BJ (cell line): ENCODE measurements at regions of chr7 and their contacts with region 1.

Region 1: DNA sequence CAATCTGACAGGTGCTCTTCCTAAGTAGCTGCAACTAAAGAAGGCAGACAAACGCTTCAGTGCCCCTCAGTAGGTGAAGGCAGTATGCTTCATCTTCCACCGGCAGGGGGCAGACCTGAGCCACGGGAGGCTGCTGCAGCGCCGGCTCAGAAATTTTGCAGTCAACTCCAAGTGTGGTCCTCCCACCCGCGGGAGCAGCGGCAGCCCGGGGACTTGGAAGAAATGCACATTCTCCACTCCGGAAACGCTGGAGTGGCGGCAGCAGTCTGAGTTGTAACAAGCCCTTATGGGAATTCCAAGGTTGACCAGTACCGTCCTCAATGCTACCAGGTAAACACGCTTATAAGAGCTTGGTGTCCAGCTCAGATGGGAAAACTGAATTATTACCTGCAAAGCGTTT is 3.4 kb downstream of the IGFBP3 start:
- DNase-seq: no peak
- H3K4me3 ChIP-seq: peak overlapping the region; percentile 75
- H3K27me3 ChIP-seq: no peaks in the 10 kb centered on the region
- CTCF ChIP-seq: peak; percentile 94

Region 2: DNA sequence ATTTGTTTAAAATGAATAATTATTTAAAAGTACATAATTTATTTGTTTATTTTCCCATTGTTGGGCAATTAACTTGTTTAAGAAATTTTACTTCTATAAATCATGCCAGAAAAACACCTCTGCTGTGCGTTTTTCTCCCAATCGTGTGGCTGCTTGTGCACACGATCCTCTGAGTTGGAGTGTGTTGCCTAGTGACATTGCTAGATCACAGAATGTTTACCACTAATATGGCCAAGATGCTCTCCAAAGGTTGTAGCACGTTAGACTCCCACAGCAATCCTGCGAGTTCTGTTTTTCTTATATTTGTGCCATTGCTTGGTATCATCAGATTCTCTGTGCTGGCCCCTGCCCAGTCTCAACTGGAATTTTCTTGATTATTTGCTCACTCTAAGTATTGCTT is 550.6 kb before region 1 on chr7:
- CTCF ChIA-PET with region 1: no interaction called
- POLR2A ChIA-PET with region 1: no interaction called
- DNase-seq: no peak
- H3K4me3 ChIP-seq: no peak overlapping the region
- H3K27me3 ChIP-seq: peaks cover 4% of the 10 kb centered on the region; the same call in 1 of the 2 replicates
- CTCF ChIP-seq: no peak

Region 3: GRCh38 chr7:45697576-45698136 is 220.0 kb before region 1 on chr7:
- CTCF ChIA-PET with region 1: no interaction called
- POLR2A ChIA-PET with region 1: no interaction called
- DNase-seq: no peak
- H3K4me3 ChIP-seq: no peak overlapping the region
- H3K27me3 ChIP-seq: peaks cover 10% of the 10 kb centered on the region
- CTCF ChIP-seq: no peak

Region 4: GRCh38 chr7:45709168-45710042 is 208.3 kb before region 1 on chr7:
- CTCF ChIA-PET with region 1: no interaction called
- POLR2A ChIA-PET with region 1: no interaction called
- DNase-seq: peak; percentile 32
- H3K4me3 ChIP-seq: no peak overlapping the region
- H3K27me3 ChIP-seq: peaks cover 6% of the 10 kb centered on the region
- CTCF ChIP-seq: no peak

Region 5: GRCh38 chr7:45890902-45891461 is 26.7 kb before region 1 on chr7:
- CTCF ChIA-PET with region 1: interaction called, 46 read pairs
- POLR2A ChIA-PET with region 1: no interaction called
- DNase-seq: no peak
- H3K4me3 ChIP-seq: no peak overlapping the region
- H3K27me3 ChIP-seq: peaks cover 3% of the 10 kb centered on the region
- CTCF ChIP-seq: peak; percentile 53

Region 6: GRCh38 chr7:45902820-45903219 is 14.8 kb before region 1 on chr7:
- CTCF ChIA-PET with region 1: interaction called, 21 read pairs
- POLR2A ChIA-PET with region 1: no interaction called
- DNase-seq: no peak
- H3K4me3 ChIP-seq: no peak overlapping the region
- H3K27me3 ChIP-seq: no peaks in the 10 kb centered on the region; the same call in 1 of the 2 replicates
- CTCF ChIP-seq: no peak

Region 7: DNA sequence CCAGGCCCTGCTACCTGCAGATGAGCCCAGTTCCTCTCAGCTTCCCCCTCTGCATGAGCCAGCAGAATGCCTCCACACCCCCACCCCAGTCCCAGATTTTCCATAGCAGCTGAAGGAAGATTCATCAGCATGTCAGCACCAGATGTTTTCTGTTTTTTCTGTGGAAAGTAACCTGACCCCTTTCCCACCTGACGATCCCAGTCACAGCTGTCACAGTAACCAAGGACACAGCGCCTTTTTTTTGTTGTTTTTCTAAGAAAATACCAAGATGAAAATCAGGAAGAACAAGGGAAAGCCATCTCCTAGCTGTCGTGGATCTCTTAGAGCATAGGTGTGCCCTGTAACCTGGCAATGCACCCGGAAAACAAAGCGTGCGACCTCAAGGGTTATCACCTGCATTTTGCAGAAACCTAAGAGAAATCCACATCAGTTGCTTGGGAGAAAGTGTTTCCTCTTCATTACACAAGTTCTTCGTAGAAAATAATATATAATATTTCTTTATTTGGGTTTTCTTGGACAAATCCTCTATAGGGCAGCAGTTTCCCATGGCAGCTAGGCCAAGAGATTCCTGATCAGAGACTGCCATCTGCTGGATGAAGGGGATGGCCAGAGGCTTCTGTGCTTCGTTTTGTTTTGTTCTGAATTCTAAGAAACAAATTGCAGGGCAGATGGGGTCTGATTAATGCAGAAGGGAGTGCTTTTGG is 1262.3 kb after region 1 on chr7:
- CTCF ChIA-PET with region 1: interaction called, 88 read pairs
- POLR2A ChIA-PET with region 1: no interaction called
- DNase-seq: no peak
- H3K4me3 ChIP-seq: no peak overlapping the region
- H3K27me3 ChIP-seq: peaks cover 5% of the 10 kb centered on the region
- CTCF ChIP-seq: peak; percentile 90